Panc1 (cell line): ENCODE measurements at regions of chr7 and their contacts with region 1.

Region 1: GRCh38 chr7:7918736-7919448 is 49.7 kb upstream of the GLCCI1 start:
- DNase-seq: no peak
- ATAC-seq: no peak
- H3K4me3 ChIP-seq: no peak overlapping the region
- H3K27ac ChIP-seq: no peak overlapping the region
- H3K4me1 ChIP-seq: no peaks in the 10 kb centered on the region
- H3K27me3 ChIP-seq: no peaks in the 10 kb centered on the region
- CTCF ChIP-seq: no peak

Region 2: GRCh38 chr7:7848246-7848645 is 70.6 kb before region 1 on chr7:
- CTCF ChIA-PET with region 1: interaction called, 3 read pairs
- POLR2A ChIA-PET with region 1: no interaction called
- in situ Hi-C with region 1: loop called (anchors 5 kb)
- intact Hi-C with region 1: no loop called
- DNase-seq: no peak
- ATAC-seq: no peak
- H3K4me3 ChIP-seq: no peak overlapping the region
- H3K27ac ChIP-seq: no peak overlapping the region
- H3K4me1 ChIP-seq: no peaks in the 10 kb centered on the region
- H3K27me3 ChIP-seq: no peaks in the 10 kb centered on the region
- CTCF ChIP-seq: no peak

Region 3: DNA sequence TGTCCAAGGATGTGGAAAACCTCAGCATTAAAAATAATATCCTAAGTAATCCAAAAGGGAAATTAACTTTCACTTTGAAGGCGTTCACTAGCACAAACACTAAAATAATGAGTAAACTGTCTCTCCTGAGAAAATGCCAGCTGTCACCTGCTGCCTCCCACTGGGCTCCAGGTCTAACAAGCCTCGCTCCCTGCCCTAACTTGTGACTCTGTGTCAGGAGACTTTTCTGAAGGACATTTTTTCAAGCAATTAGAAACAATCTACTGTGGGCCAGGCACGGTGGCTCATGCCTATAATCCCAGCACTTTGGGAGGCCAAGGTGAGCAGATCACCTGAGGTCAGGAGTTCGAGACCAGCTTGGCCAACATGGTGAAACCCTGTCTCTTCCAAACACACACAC is 23.1 kb before region 1 on chr7:
- CTCF ChIA-PET with region 1: no interaction called
- POLR2A ChIA-PET with region 1: interaction called, 10 read pairs
- in situ Hi-C with region 1: no loop called
- intact Hi-C with region 1: no loop called
- DNase-seq: no peak
- ATAC-seq: no peak
- H3K4me3 ChIP-seq: no peak overlapping the region
- H3K27ac ChIP-seq: no peak overlapping the region
- H3K4me1 ChIP-seq: no peaks in the 10 kb centered on the region
- H3K27me3 ChIP-seq: no peaks in the 10 kb centered on the region
- CTCF ChIP-seq: no peak

Region 4: GRCh38 chr7:8015100-8015748 is 96.3 kb after region 1 on chr7:
- CTCF ChIA-PET with region 1: no interaction called
- POLR2A ChIA-PET with region 1: no interaction called
- in situ Hi-C with region 1: no loop called
- intact Hi-C with region 1: no loop called
- DNase-seq: no peak
- ATAC-seq: no peak
- H3K4me3 ChIP-seq: no peak overlapping the region
- H3K27ac ChIP-seq: no peak overlapping the region
- H3K4me1 ChIP-seq: no peaks in the 10 kb centered on the region
- H3K27me3 ChIP-seq: no peaks in the 10 kb centered on the region
- CTCF ChIP-seq: no peak